Gastrocnemius medialis (tissue), 4 donors: ENCODE measurements at regions of chr9 and their contacts with region 1.

Region 1: DNA sequence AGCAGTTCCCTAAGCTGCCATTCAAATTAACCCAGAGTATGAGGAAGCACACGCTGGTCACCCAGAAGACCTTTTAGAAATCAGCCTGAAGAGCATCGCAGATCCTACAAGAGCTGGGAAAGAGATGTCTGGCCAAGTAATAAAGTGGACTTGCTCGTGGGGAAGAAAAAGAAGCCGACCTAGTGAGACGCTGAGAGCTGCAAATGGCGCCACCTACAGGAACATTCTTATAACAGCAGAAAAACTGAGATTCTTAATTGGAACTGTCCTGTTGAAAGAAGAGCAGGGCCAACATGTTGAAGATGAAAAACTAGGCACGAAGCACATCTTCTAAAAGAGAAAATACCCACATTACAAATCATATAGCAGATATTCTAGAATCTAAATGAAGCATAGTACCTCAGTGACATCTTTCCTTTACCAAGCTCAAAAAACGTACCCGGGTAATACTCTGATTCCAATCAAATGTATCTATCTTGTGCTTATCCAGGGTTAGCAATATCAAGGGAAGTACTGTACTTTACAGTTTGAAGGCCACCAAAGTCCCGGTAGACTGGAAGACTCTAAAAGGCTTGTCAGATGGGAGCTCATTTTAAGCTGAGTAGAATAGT is 3.9 kb upstream of the GNAQ start:
- DNase-seq: peak; percentile 23 to 38
- ATAC-seq: peak; percentile 15 to 22
- H3K4me3 ChIP-seq: no peak overlapping the region
- H3K27ac ChIP-seq: peak overlapping the region; percentile 1 to 53 (median 36)
- H3K4me1 ChIP-seq: peaks cover 3 to 9% of the 10 kb centered on the region in 2 donors
- H3K27me3 ChIP-seq: no peaks in the 10 kb centered on the region
- CTCF ChIP-seq: peak; percentile 72 to 89 (median 74)
- POLR2A ChIP-seq: no peak

Region 2: DNA sequence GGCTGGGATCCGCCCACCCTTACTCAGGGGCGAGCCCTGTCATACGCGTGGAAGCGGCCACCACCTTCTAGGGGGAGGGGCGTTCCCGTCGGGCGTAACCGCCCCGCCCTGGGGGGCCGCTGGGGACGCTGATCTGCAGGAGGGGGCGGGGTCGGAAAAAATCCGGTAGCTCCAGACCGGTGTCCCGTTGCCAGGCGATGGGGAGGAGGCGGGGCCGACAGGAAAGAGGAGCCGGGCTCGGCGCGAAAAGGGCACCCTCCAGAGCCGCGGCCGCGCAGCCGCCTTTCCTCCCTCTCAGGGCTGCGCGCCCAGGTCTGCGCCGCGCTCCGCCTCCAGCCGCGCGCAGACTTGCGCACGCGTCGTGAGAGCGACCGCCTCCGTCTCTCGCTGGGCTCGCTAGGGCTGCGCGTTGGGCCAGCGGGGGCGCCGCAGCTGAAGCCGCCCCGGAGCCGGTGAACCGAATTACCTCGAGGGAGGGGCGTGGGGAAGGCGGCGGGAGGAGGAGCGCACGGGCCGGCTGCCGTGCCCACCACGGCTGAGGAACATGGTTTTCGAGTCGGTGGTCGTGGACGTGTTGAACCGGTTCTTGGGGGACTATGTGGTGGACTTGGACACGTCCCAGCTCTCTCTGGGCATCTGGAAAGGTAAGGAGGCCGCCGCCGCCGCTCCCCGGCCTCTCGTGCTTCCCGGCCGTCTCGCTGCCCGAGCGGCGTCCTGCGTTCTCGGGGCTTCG is 858.2 kb before region 1 on chr9 and contains the start of gene VPS13A:
- in situ Hi-C with region 1: no loop called
- intact Hi-C with region 1: loop called (anchors 5 kb)
- DNase-seq: peak; percentile 83 to 90
- ATAC-seq: peak; percentile 82 to 90
- H3K4me3 ChIP-seq: peak within 1 kb of the TSS; percentile 86 to 93 (median 90)
- H3K27ac ChIP-seq: peak within 1 kb of the TSS; percentile 96 to 99 (median 98)
- H3K4me1 ChIP-seq: peaks cover 42 to 52% of the 10 kb centered on the region in 2 donors
- H3K27me3 ChIP-seq: no peaks in the 10 kb centered on the region
- CTCF ChIP-seq: peak in 2 of 5 experiments; percentile 17 to 34
- POLR2A ChIP-seq: peak; percentile 85 to 87
- total RNA-seq, gene VPS13A: 16.4 to 51.0 (median 29.4) TPM

Region 3: DNA sequence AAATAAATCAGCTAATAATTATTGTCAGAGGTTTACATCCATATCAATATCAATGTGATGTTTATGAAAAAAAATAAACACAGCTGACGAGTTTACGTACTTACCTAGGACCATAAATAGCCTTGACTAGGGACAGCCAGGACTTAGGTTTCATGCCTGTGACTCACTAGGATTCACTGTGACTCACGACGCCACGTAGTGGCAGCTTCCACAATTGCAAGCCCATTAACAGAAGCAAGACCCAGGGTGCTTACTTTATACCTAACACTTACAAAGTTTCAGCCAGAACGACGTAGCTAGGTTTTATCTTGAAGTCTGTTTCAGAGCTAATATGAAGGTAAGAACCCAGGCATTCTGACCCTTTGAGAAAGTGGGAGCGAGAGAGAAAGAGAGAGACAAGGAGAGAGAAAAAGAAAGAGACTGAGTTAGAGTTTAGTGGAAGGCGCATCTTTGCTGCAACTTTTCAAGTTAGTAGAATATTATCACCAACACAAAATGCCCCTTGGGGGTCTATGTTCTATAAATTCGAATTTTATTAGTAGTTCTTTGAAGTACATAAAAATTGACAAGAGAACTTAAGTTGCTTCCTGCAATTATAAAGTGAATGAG is 578.6 kb before region 1 on chr9:
- in situ Hi-C with region 1: loop called in 1 of 4 experiments (anchors 25 kb)
- intact Hi-C with region 1: no loop called
- DNase-seq: peak; percentile 27 to 76
- ATAC-seq: peak; percentile 75 to 91
- H3K4me3 ChIP-seq: no peak overlapping the region
- H3K27ac ChIP-seq: no peak overlapping the region
- H3K4me1 ChIP-seq: no peaks in the 10 kb centered on the region
- H3K27me3 ChIP-seq: no peaks in the 10 kb centered on the region
- CTCF ChIP-seq: peak; percentile 33 to 79 (median 74)
- POLR2A ChIP-seq: no peak

Region 4: DNA sequence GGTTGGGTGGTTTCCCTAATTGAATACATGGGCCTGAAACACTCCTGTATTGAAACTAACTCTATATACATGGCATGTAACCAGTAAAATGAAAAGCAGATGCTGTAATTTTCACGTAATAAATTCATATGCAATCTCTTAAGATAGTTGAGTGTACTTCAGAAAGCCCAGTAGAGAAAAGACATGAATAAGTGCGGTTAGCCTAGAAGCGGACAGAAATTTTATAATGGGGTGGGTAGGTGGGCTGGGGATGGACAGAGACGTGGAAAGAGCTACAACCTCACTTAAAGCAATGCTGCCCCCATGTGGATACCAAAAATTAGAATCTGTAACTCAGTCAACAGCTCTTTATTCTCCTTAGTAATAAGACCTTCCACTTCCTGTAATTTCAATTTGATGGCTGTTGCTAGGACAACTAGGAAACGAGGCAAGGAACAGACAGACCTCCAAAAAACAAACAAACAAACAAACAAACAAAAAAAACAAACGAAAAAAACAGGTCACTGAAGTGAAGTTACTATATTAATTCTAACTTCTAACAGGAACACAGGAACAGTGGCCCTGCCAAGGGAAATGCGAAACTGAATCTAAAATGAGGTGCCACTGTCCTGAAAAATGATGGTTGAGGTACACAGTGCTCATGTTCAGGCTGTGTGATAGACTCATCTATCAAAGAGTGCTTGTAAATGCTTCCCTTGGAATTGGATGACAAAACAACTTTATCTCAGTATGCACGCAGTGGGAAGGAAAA is 284.0 kb before region 1 on chr9:
- in situ Hi-C with region 1: loop called in 2 of 4 experiments (anchors 25 kb)
- intact Hi-C with region 1: loop called (anchors 5 kb)
- DNase-seq: no peak
- ATAC-seq: peak; percentile 39 to 68
- H3K4me3 ChIP-seq: no peak overlapping the region
- H3K27ac ChIP-seq: peak overlapping the region in 1 of 4 donors; percentile 10
- H3K4me1 ChIP-seq: peaks cover 0 to 3% of the 10 kb centered on the region in 2 donors
- H3K27me3 ChIP-seq: no peaks in the 10 kb centered on the region
- CTCF ChIP-seq: peak; percentile 35 to 58 (median 48)
- POLR2A ChIP-seq: no peak

Region 5: GRCh38 chr9:77841739-77842386 is 193.6 kb before region 1 on chr9:
- in situ Hi-C with region 1: loop called in 1 of 4 experiments (anchors 25 kb)
- intact Hi-C with region 1: no loop called
- DNase-seq: no peak
- ATAC-seq: peak in 1 of 2 donors; percentile 33
- H3K4me3 ChIP-seq: no peak overlapping the region
- H3K27ac ChIP-seq: no peak overlapping the region
- H3K4me1 ChIP-seq: peaks cover 4 to 6% of the 10 kb centered on the region in 2 donors
- H3K27me3 ChIP-seq: no peaks in the 10 kb centered on the region
- CTCF ChIP-seq: peak in 4 of 5 experiments; percentile 6 to 41 (median 21)
- POLR2A ChIP-seq: no peak

Region 6: GRCh38 chr9:77997611-77998284 is 37.7 kb before region 1 on chr9:
- in situ Hi-C with region 1: no loop called
- intact Hi-C with region 1: loop called (anchors 2 kb)
- DNase-seq: no peak
- ATAC-seq: no peak
- H3K4me3 ChIP-seq: no peak overlapping the region
- H3K27ac ChIP-seq: peak overlapping the region in 1 of 4 donors; percentile 5
- H3K4me1 ChIP-seq: peaks cover 12 to 14% of the 10 kb centered on the region in 2 donors
- H3K27me3 ChIP-seq: no peaks in the 10 kb centered on the region
- CTCF ChIP-seq: no peak
- POLR2A ChIP-seq: no peak